K562 (cell line): ENCODE measurements at regions of chr3 and their contacts with region 1.

Region 1: GRCh38 chr3:36957862-36958686 is 13.2 kb upstream of the TRANK1 start:
- DNase-seq: peak; percentile 93 to 96 (median 94)
- ATAC-seq: peak; percentile 79
- H3K4me3 ChIP-seq: peak overlapping the region; percentile 10; the same call in 1 of the 2 replicates
- H3K27ac ChIP-seq: peak overlapping the region; percentile 79
- H3K4me1 ChIP-seq: peaks cover 22 to 51% of the 10 kb centered on the region in 2 experiments
- H3K27me3 ChIP-seq: no peaks in the 10 kb centered on the region
- CTCF ChIP-seq: peak in 1 of 3 experiments; percentile 29; a peak in 2 of 6 replicates
- EP300 ChIP-seq: peak; percentile 99
- POLR2A ChIP-seq: no peak
- RAD21 ChIP-seq: peak in 1 of 2 experiments; percentile 23; a peak in 2 of 4 replicates

Region 2: GRCh38 chr3:36792342-36792741 is 165.7 kb before region 1 on chr3:
- CTCF ChIA-PET with region 1: no interaction called
- POLR2A ChIA-PET with region 1: no interaction called
- in situ Hi-C with region 1: no loop called
- intact Hi-C with region 1: loop called (anchors 1 kb)
- DNase-seq: peak; percentile 57 to 66 (median 62)
- ATAC-seq: peak; percentile 96
- H3K4me3 ChIP-seq: no peak overlapping the region
- H3K27ac ChIP-seq: no peak overlapping the region
- H3K4me1 ChIP-seq: no peaks in the 10 kb centered on the region
- H3K27me3 ChIP-seq: peaks cover 0 to 2% of the 10 kb centered on the region in 2 experiments; a peak in 1 of 5 replicates
- CTCF ChIP-seq: peak; percentile 74 to 87 (median 74)
- EP300 ChIP-seq: no peak
- POLR2A ChIP-seq: no peak
- RAD21 ChIP-seq: peak; percentile 81 to 85

Region 3: GRCh38 chr3:36904641-36905040 is 53.4 kb before region 1 on chr3:
- CTCF ChIA-PET with region 1: interaction called, 4 read pairs
- POLR2A ChIA-PET with region 1: interaction called, 14 read pairs
- in situ Hi-C with region 1: no loop called
- intact Hi-C with region 1: loop called (anchors 1 kb)
- DNase-seq: peak in 2 of 4 experiments; percentile 58 to 68
- ATAC-seq: peak; percentile 80
- H3K4me3 ChIP-seq: no peak overlapping the region
- H3K27ac ChIP-seq: no peak overlapping the region
- H3K4me1 ChIP-seq: peaks cover 25 to 34% of the 10 kb centered on the region in 2 experiments
- H3K27me3 ChIP-seq: no peaks in the 10 kb centered on the region
- CTCF ChIP-seq: peak; percentile 69 to 77 (median 69)
- EP300 ChIP-seq: no peak
- POLR2A ChIP-seq: no peak
- RAD21 ChIP-seq: peak; percentile 54 to 86

Region 4: GRCh38 chr3:36969540-36970432 is 11.7 kb after region 1 on chr3:
- CTCF ChIA-PET with region 1: no interaction called
- POLR2A ChIA-PET with region 1: interaction called, 19 read pairs
- in situ Hi-C with region 1: no loop called
- intact Hi-C with region 1: no loop called
- DNase-seq: peak; percentile 88 to 99 (median 92)
- ATAC-seq: peak; percentile 98
- H3K4me3 ChIP-seq: no peak overlapping the region
- H3K27ac ChIP-seq: peak overlapping the region; percentile 79
- H3K4me1 ChIP-seq: peaks cover 31 to 44% of the 10 kb centered on the region in 2 experiments
- H3K27me3 ChIP-seq: no peaks in the 10 kb centered on the region
- CTCF ChIP-seq: no peak
- EP300 ChIP-seq: peak; percentile 84
- POLR2A ChIP-seq: 0 out of 2 replicates have a peak, but pooled peaks have one; percentile 43
- RAD21 ChIP-seq: peak in 1 of 2 experiments; percentile 27; a peak in 1 of 4 replicates

Region 5: GRCh38 chr3:37210230-37210629 is 252.2 kb after region 1 on chr3:
- CTCF ChIA-PET with region 1: no interaction called
- POLR2A ChIA-PET with region 1: no interaction called
- in situ Hi-C with region 1: no loop called
- intact Hi-C with region 1: loop called (anchors 5 kb)
- DNase-seq: no peak
- ATAC-seq: no peak
- H3K4me3 ChIP-seq: no peak overlapping the region
- H3K27ac ChIP-seq: no peak overlapping the region
- H3K4me1 ChIP-seq: no peaks in the 10 kb centered on the region; a peak in 1 of 5 replicates
- H3K27me3 ChIP-seq: peaks cover 3 to 11% of the 10 kb centered on the region in 2 experiments; a peak in 4 of 5 replicates
- CTCF ChIP-seq: no peak
- EP300 ChIP-seq: no peak
- POLR2A ChIP-seq: no peak
- RAD21 ChIP-seq: no peak